Activated CD4-positive, alpha-beta memory T cell treated with anti-CD3 and anti-CD28 coated beads, Interleukin-2, amount 10 ng/mL, durations not matched to agents 7 days and 5 days (primary cell): ENCODE measurements at regions of chr14 and their contacts with region 1.

Region 1: GRCh38 chr14:87732562-87732961 is 260.4 kb downstream of the GALC start:
- DNase-seq: no peak
- H3K4me3 Mint-ChIP-seq: no peak overlapping the region
- H3K27ac Mint-ChIP-seq: no peak overlapping the region
- H3K4me1 Mint-ChIP-seq: no peaks in the 10 kb centered on the region
- H3K27me3 Mint-ChIP-seq: no peaks in the 10 kb centered on the region

Region 2: GRCh38 chr14:87745507-87746118 is 13.1 kb after region 1 on chr14:
- CTCF ChIA-PET with region 1: interaction called, 10 read pairs
- POLR2A ChIA-PET with region 1: interaction called, 3 read pairs
- DNase-seq: no peak
- H3K4me3 Mint-ChIP-seq: no peak overlapping the region
- H3K27ac Mint-ChIP-seq: no peak overlapping the region
- H3K4me1 Mint-ChIP-seq: no peaks in the 10 kb centered on the region
- H3K27me3 Mint-ChIP-seq: no peaks in the 10 kb centered on the region

Region 3: DNA sequence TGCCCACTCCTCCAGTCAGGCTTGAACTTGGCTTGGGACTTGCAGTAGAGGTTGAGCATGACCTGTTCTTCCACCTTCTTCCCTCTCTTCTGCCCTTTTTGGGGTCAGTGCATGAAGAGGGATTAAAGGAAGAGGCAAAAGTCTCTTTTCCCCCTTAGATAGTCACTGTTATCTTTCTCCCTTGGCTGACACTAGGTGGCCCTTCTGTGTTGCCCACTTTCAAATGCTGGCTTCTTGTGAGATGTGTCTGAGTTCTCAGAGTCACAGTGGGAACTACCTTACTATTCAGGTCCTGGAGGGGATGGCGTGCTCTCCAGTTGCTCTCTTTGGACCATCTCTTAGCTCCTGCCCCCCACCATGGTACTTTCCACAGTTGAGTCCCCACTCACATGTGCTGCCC is 346.0 kb after region 1 on chr14:
- CTCF ChIA-PET with region 1: no interaction called
- POLR2A ChIA-PET with region 1: no interaction called
- DNase-seq: no peak
- H3K4me3 Mint-ChIP-seq: no peak overlapping the region
- H3K27ac Mint-ChIP-seq: no peak overlapping the region
- H3K4me1 Mint-ChIP-seq: no peaks in the 10 kb centered on the region
- H3K27me3 Mint-ChIP-seq: no peaks in the 10 kb centered on the region